ENCODE measurements at regions of chr1 and their contacts with region 1.

Region 1: DNA sequence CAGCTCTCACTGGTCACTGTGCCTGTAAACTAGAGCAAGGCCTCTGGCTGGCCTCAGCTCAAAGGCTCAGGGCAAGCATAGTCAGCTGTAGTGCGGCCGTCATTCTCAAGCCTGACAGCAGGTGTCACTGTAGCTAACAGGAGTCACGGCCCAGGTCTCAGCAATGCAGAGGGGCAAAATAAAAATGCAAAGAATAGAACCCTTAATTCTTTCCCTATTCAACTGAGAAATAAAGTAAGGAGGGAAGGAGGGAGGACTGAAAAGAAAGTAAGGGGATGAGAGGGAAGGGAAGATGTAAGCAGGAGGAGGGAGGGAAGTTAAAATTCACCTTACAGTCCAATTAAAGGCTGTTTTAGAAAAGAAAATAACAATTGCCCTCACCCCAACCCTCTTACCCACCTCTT is 106.1 kb downstream of the KIAA0319L start:
- DNase-seq: peak; percentile 91
- H3K4me3 ChIP-seq: no peak overlapping the region
- H3K27ac ChIP-seq: peak overlapping the region in 5 of 8 donors; percentile 64 to 84 (median 72)
- H3K4me1 ChIP-seq: peaks cover 9 to 89% (median 30%) of the 10 kb centered on the region in 6 donors
- H3K27me3 ChIP-seq: no peaks in the 10 kb centered on the region
- CTCF ChIP-seq: peak; percentile 73 to 92 (median 83)
- POLR2A ChIP-seq: no peak

Region 2: DNA sequence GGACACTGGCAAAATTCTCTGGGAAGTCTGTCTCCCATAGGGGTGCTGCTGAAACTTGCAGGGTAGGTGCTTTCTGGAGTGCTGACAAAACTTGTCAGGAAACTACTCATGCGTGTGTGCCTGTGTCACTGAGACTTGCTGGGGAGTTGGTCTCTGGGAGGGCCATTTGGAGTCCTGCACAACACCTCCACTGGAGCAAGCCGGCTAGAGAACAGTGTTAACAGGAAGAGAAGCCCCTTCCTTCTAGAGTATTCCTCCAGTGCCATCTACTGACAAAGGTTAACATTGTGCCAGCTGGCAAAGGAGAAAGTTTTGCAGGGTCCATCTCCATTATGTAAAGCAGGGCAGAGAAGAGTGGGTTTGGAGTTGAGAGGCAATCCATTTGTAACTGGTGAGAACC is 152.7 kb before region 1 on chr1:
- intact Hi-C with region 1: no loop called
- DNase-seq: no peak
- H3K4me3 ChIP-seq: no peak overlapping the region
- H3K27ac ChIP-seq: peak overlapping the region in 1 of 8 donors; percentile 4
- H3K4me1 ChIP-seq: peaks cover 0 to 19% (median 6%) of the 10 kb centered on the region in 6 donors
- H3K27me3 ChIP-seq: no peaks in the 10 kb centered on the region
- CTCF ChIP-seq: peak in 8 of 11 experiments; percentile 17 to 58 (median 44)
- POLR2A ChIP-seq: no peak

Region 3: DNA sequence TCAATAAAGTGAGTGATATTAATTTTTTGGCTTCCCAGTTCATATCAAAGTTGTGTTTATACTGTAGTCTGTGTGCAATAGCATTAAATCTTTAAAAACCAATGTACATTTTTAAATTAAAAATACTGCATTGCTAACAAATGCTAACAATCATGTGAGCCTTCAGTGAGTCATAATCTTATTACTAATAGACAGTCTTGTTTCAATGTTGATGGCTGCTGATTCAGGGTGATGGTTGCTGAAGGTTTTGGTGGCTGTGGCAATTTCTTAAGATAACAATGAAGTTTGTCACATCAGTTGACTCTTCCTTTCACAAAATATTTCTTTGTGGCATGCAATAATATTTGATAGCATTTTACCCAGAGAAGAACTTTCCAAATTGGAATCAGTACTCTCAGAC is 73.6 kb before region 1 on chr1:
- intact Hi-C with region 1: no loop called
- DNase-seq: no peak
- H3K4me3 ChIP-seq: no peak overlapping the region
- H3K27ac ChIP-seq: no peak overlapping the region
- H3K4me1 ChIP-seq: no peaks in the 10 kb centered on the region
- H3K27me3 ChIP-seq: no peaks in the 10 kb centered on the region
- CTCF ChIP-seq: no peak
- POLR2A ChIP-seq: no peak

Region 4: DNA sequence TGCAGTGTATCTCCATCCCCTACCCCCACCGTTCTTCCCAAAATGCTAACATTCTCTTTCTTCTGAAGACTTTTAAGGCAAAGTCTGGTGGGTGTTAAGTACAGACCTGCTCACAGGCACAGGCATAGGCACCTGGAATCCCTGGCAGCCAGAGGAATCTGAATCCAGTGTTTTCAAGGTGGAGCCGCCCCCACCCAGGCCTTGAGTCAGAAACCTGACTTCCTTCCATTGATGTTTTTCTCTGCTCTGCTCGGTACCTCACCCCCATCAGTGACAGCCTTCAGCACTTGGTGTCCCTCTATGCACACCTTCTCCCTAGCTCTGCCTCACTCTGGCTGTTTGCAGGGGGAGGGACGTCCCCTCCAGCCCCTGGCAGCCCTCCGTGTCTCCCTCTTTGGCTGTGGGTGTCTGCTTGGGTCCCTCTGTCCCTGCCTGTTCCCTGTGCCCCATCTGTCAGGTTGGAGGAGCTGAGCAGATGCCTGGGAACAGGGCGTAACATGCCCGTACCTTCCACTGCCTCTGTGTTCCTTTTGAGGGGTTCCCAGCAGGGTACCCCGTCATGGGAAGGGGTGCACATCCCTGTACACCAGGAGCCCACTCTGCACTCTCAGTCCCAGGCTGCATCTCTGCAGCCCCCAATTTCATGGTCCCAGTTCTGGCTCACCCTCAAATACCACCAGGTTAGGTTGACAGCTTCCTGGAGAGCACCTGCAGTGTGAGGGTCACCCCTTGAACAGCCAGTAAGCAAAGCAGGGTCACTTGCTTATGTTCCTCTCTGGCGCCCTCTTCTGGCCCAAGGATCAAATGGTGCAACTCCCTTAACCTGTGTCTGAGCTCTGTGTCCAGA is 113.1 kb after region 1 on chr1:
- intact Hi-C with region 1: loop called (anchors 5 kb)
- DNase-seq: peak; percentile 89
- H3K4me3 ChIP-seq: no peak overlapping the region
- H3K27ac ChIP-seq: no peak overlapping the region
- H3K4me1 ChIP-seq: peaks cover 0 to 62% (median 12%) of the 10 kb centered on the region in 6 donors
- H3K27me3 ChIP-seq: no peaks in the 10 kb centered on the region
- CTCF ChIP-seq: peak; percentile 55 to 92 (median 79)
- POLR2A ChIP-seq: no peak

Region 5: GRCh38 chr1:35577071-35577998 is 126.2 kb after region 1 on chr1:
- intact Hi-C with region 1: no loop called
- DNase-seq: peak; percentile 95
- H3K4me3 ChIP-seq: peak overlapping the region; percentile 43 to 80 (median 58)
- H3K27ac ChIP-seq: peak overlapping the region in 6 of 8 donors; percentile 37 to 85 (median 68)
- H3K4me1 ChIP-seq: peaks cover 5 to 74% (median 42%) of the 10 kb centered on the region in 6 donors
- H3K27me3 ChIP-seq: peaks cover 0 to 47% (median 30%) of the 10 kb centered on the region in 7 donors
- CTCF ChIP-seq: no peak
- POLR2A ChIP-seq: no peak

Region 6: GRCh38 chr1:35726450-35727433 is 275.6 kb after region 1 on chr1:
- intact Hi-C with region 1: loop called (anchors 10 kb)
- DNase-seq: no peak
- H3K4me3 ChIP-seq: no peak overlapping the region
- H3K27ac ChIP-seq: no peak overlapping the region
- H3K4me1 ChIP-seq: peaks cover 0 to 14% (median 6%) of the 10 kb centered on the region in 6 donors
- H3K27me3 ChIP-seq: no peaks in the 10 kb centered on the region
- CTCF ChIP-seq: peak; percentile 44 to 91 (median 76)
- POLR2A ChIP-seq: no peak

Region 7: DNA sequence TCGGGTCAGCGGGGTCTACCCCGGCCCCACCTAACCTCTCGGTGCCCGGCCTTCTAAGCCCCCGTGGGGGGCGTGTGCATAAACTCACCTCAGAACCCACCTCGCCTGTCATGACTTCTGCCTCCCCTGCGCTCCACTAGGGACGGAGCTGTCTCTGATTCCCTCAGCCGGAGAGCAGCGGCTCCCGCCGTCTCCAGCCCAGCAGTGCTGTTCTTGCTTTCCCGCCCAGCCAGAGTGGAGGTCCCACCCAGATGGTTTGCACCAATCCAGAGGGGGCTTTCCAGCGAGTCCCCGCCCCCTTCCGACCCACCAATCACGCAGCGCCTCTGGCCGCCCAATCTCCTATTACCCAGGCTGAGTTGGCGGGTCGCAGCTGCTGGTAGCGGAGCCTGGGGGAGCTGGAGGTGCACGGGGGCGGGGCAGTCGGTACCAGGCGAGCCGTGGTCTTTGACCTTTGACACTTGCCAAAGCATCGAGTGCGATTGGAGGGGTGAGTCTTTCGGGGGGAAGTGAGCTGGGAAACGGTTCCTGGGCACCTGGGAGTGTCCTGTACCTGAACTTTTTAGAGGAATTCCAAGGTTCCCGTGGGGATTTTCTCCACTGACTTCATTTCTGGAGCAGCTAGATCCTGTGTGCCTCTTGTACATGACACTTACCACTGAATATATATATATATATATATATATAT is 318.8 kb after region 1 on chr1 and contains the start of gene CLSPN:
- intact Hi-C with region 1: loop called (anchors 10 kb)
- DNase-seq: peak; percentile 95
- H3K4me3 ChIP-seq: peak within 1 kb of the TSS; percentile 98 to 100 (median 99)
- H3K27ac ChIP-seq: peak within 1 kb of the TSS; percentile 77 to 93 (median 89)
- H3K4me1 ChIP-seq: peaks cover 3 to 35% (median 15%) of the 10 kb centered on the region in 6 donors
- H3K27me3 ChIP-seq: no peaks in the 10 kb centered on the region
- CTCF ChIP-seq: peak in 1 of 11 experiments; percentile 12
- POLR2A ChIP-seq: peak in 1 of 3 donors; percentile 9
- total RNA-seq, gene CLSPN: 3.1 to 7.1 (median 5.0) TPM

Region 8: GRCh38 chr1:35795295-35795694 is 344.2 kb after region 1 on chr1:
- intact Hi-C with region 1: no loop called
- DNase-seq: no peak
- H3K4me3 ChIP-seq: no peak overlapping the region
- H3K27ac ChIP-seq: no peak overlapping the region
- H3K4me1 ChIP-seq: peaks cover 0 to 34% (median 10%) of the 10 kb centered on the region in 6 donors
- H3K27me3 ChIP-seq: no peaks in the 10 kb centered on the region
- CTCF ChIP-seq: no peak
- POLR2A ChIP-seq: no peak

Measured in spleen (tissue), 13 donors.